H1 (cell line): ENCODE measurements at regions of chr2 and their contacts with region 1.

Region 1: GRCh38 chr2:132448771-132449170 is 32.2 kb downstream of the GPR39 start:
- DNase-seq: peak in 1 of 2 experiments; percentile 66
- H3K4me3 ChIP-seq: no peak overlapping the region
- H3K27ac ChIP-seq: no peak overlapping the region
- H3K4me1 ChIP-seq: no peaks in the 10 kb centered on the region; a peak in 1 of 7 replicates
- H3K27me3 ChIP-seq: no peaks in the 10 kb centered on the region
- CTCF ChIP-seq: peak in 2 of 3 experiments; percentile 55 to 68; a peak in 3 of 4 replicates
- EP300 ChIP-seq: no peak
- POLR2A ChIP-seq: no peak
- RAD21 ChIP-seq: peak; percentile 65 to 75

Region 2: DNA sequence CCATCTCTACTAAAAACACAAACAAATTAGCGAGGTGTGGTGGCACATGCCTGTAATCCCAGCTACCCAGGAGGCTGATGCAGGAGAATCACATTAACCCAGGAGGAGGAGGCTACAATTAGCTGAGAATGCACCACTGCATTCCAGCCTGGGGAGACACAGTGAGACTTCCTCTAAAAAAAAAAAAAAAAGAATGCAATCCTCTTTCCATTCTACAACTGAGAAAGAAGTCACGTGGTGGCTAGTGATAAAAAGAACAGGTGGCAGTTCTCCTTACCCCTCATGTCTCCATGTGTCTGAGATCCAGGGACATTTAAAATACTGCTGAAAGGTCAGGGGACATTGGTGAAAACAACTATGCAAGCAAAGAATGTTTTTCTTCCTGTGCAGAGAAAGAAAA is 56.5 kb before region 1 on chr2:
- CTCF ChIA-PET with region 1: no interaction called
- POLR2A ChIA-PET with region 1: no interaction called
- DNase-seq: peak in 1 of 2 experiments; percentile 17
- H3K4me3 ChIP-seq: no peak overlapping the region
- H3K27ac ChIP-seq: no peak overlapping the region
- H3K4me1 ChIP-seq: peaks cover 3 to 9% (median 4%) of the 10 kb centered on the region in 4 experiments; a peak in 6 of 7 replicates
- H3K27me3 ChIP-seq: no peaks in the 10 kb centered on the region
- CTCF ChIP-seq: no peak
- EP300 ChIP-seq: no peak
- POLR2A ChIP-seq: no peak
- RAD21 ChIP-seq: no peak

Region 3: DNA sequence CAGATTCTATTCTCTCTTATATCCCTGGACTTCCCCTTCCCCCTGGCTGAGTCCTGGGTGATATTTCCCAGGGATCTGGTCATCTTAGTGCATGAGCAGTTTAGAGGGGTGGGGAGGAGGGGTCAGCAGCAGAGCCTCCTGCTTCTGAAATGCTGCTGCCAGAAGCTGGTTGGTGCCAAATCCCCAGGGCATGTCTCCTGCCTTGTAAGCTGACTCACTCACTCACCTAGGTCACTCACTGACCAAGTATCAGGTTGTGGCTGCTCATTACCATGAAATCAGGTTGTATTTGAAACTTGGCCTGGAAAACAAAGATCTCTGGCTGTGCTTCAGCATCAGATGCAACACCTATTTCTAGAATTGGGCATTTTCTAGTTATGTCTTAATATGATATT is 17.9 kb before region 1 on chr2:
- CTCF ChIA-PET with region 1: interaction called, 47 read pairs
- POLR2A ChIA-PET with region 1: interaction called, 3 read pairs
- DNase-seq: no peak
- H3K4me3 ChIP-seq: no peak overlapping the region
- H3K27ac ChIP-seq: no peak overlapping the region
- H3K4me1 ChIP-seq: no peaks in the 10 kb centered on the region
- H3K27me3 ChIP-seq: no peaks in the 10 kb centered on the region
- CTCF ChIP-seq: no peak
- EP300 ChIP-seq: no peak
- POLR2A ChIP-seq: no peak
- RAD21 ChIP-seq: no peak

Region 4: DNA sequence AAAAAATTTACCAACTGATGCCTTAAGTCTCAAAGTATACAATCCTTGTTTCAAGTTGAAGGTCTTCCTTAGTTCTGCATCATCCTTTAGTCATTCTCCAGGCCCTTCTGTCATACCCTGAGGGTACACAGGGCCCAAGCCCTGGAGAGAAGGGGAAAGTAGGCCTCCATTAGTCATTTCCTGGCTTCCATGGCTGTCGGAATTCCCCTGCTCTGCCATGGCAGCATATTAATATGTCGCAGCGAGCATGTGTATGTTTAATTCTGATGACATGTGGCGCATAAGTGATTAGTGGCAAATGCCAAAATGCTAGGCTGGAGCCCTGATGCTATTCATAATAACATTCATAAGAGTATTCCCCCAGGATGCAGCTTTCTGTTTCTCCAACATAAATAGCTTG is 10.1 kb before region 1 on chr2:
- CTCF ChIA-PET with region 1: interaction called, 47 read pairs
- POLR2A ChIA-PET with region 1: no interaction called
- DNase-seq: no peak
- H3K4me3 ChIP-seq: no peak overlapping the region
- H3K27ac ChIP-seq: no peak overlapping the region
- H3K4me1 ChIP-seq: peaks cover 0 to 5% (median 4%) of the 10 kb centered on the region in 4 experiments; a peak in 3 of 7 replicates
- H3K27me3 ChIP-seq: no peaks in the 10 kb centered on the region
- CTCF ChIP-seq: no peak
- EP300 ChIP-seq: no peak
- POLR2A ChIP-seq: no peak
- RAD21 ChIP-seq: no peak

Region 5: GRCh38 chr2:132460781-132461180 is 12.0 kb after region 1 on chr2:
- CTCF ChIA-PET with region 1: interaction called, 15 read pairs
- POLR2A ChIA-PET with region 1: interaction called, 3 read pairs
- DNase-seq: no peak
- H3K4me3 ChIP-seq: no peak overlapping the region
- H3K27ac ChIP-seq: no peak overlapping the region
- H3K4me1 ChIP-seq: no peaks in the 10 kb centered on the region
- H3K27me3 ChIP-seq: no peaks in the 10 kb centered on the region
- CTCF ChIP-seq: no peak
- EP300 ChIP-seq: no peak
- POLR2A ChIP-seq: no peak
- RAD21 ChIP-seq: no peak